Aorta (tissue), 5 donors: ENCODE measurements at regions of chr2 and their contacts with region 1.

Region 1: GRCh38 chr2:8169443-8169842 is 512.4 kb upstream of the ID2 start:
- DNase-seq: no peak
- ATAC-seq: peak; percentile 26
- H3K4me3 ChIP-seq: no peak overlapping the region
- H3K27ac ChIP-seq: peak overlapping the region; percentile 46 to 83
- H3K4me1 ChIP-seq: no peaks in the 10 kb centered on the region
- H3K27me3 ChIP-seq: no peaks in the 10 kb centered on the region

Region 2: GRCh38 chr2:8004250-8004681 is 165.2 kb before region 1 on chr2:
- intact Hi-C with region 1: loop called in 1 of 2 experiments (anchors 10 kb)
- DNase-seq: no peak
- ATAC-seq: peak; percentile 84
- H3K4me3 ChIP-seq: no peak overlapping the region
- H3K27ac ChIP-seq: no peak overlapping the region
- H3K4me1 ChIP-seq: no peaks in the 10 kb centered on the region
- H3K27me3 ChIP-seq: no peaks in the 10 kb centered on the region

Region 3: GRCh38 chr2:8215159-8215863 is 45.9 kb after region 1 on chr2:
- intact Hi-C with region 1: loop called (anchors 5 kb)
- DNase-seq: no peak
- ATAC-seq: no peak
- H3K4me3 ChIP-seq: no peak overlapping the region
- H3K27ac ChIP-seq: no peak overlapping the region
- H3K4me1 ChIP-seq: peaks cover 0 to 1% of the 10 kb centered on the region in 2 donors
- H3K27me3 ChIP-seq: no peaks in the 10 kb centered on the region

Region 4: DNA sequence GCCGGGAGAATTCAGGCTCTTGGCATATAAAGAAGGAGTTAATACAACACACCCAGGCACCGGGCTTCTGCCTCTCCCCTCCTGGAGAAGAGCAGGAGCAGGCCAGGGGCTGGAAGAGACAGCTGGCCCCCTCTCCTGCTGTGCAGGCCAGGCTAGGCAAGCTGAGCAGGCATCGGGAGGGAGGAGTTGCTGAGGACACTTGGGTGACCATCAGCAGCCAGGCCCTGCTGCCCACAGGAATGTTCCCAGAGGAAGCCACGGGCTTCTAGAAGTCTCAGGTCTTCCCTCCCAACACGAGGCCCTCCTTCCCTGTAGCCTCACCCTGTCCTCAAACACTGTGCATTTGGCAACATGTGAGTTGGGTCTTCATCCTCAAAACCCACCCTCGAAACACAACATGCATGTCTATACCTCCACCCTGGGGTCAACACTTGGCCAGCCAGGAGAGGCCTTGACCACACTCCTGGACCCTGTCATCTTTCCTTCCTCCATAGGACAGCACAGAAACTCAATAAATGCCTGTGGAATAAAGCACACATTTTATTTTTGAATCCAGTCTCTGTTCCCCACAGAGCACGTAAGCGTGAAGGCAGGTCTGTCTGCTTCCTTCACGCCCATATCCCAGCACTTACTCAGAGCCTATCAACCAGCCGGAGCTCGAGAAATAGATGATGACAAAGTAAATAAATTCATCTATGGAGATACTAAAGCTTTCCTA is 78.6 kb after region 1 on chr2:
- intact Hi-C with region 1: loop called in 1 of 2 experiments (anchors 2 kb)
- DNase-seq: no peak
- ATAC-seq: peak; percentile 77
- H3K4me3 ChIP-seq: no peak overlapping the region
- H3K27ac ChIP-seq: peak overlapping the region; percentile 91 to 97
- H3K4me1 ChIP-seq: peaks cover 3 to 5% of the 10 kb centered on the region in 2 donors
- H3K27me3 ChIP-seq: no peaks in the 10 kb centered on the region

Region 5: GRCh38 chr2:8303322-8303832 is 133.9 kb after region 1 on chr2:
- intact Hi-C with region 1: loop called in 1 of 2 experiments (anchors 10 kb)
- DNase-seq: peak; percentile 80 to 81
- ATAC-seq: no peak
- H3K4me3 ChIP-seq: no peak overlapping the region
- H3K27ac ChIP-seq: no peak overlapping the region
- H3K4me1 ChIP-seq: peaks cover 0 to 1% of the 10 kb centered on the region in 2 donors
- H3K27me3 ChIP-seq: no peaks in the 10 kb centered on the region